Common myeloid progenitor, CD34-positive (primary cell): ENCODE measurements at regions of chr11 and their contacts with region 1.

Region 1: DNA sequence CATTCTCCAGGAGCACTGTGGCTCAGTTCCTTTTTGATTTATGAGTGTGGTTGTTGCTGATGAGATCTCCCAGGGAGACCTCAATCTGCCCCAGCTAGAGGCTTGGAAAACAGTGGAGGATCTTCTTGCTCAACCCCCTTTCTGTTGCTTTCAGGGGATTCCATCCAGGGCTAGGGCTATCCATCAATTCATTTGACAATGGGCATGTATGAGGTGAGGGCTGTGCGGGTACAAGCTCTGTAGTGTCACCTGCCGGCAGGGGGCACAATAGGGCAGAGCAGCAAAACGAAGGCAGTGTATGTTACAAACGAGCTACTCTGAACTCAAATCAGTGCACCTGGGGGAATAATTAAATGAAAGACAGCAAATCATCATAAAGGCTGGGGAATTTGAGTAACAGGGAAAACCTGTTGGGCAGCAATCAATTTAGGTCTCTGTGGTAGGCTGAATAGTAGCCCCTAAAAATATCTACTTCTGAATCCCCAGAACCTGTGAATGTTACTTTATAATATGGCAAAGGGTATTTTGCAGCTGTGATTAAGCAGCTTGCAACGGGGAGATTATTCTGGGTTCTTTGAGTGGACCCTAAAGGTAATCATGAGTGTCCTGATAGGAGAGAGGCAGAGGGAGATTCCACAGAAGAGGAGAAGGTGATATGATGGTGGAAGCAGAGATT is 170.3 kb upstream of the ZBED5 start:
- DNase-seq: peak; percentile 42 to 77 (median 72)
- H3K4me3 ChIP-seq: no peak overlapping the region
- H3K27ac ChIP-seq: no peak overlapping the region
- H3K4me1 ChIP-seq: no peaks in the 10 kb centered on the region
- H3K27me3 ChIP-seq: peaks cover 0 to 4% (median 0%) of the 10 kb centered on the region in 5 experiments

Region 2: DNA sequence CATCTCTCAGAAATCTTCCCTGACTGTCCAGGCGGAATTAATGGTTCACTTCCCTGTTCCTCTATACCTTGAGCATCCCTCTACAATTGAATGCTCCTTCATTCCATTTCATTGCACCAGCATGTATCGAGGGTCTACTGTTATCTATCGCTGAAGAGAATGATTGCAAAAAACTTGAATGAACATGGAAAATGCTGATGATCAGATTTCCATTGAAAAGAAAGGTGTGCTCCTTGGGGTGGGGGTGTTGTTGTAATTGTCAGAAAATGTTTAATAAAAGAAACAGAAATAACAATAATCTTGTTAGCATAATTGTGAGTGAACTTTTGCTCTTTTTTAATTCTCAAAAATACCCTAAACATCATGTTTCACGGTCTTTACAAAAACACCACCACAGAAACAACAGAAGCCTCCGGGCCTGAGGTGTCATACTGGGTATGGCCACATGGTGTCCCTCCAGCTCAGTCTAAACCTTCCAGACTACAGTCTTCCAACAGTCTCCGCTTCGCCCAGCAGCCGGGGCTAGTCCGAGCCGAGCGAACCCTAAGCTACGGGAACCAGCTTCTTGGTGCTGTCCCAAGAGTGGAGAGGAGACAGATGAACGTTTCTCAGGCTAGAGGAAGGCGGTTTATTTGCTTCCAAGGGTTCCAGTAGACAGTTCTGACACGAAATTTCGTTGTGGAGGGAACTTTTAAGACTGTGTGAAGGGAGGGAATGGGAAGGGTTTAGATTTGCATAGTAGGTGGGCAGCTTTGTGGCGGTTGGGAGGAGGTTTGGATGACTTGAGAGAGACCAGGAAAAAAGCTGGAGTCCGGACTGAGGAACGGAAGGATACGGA is 94.5 kb before region 1 on chr11:
- CTCF ChIA-PET with region 1: interaction called, 170 read pairs
- POLR2A ChIA-PET with region 1: no interaction called
- DNase-seq: peak; percentile 88 to 95 (median 93)
- H3K4me3 ChIP-seq: peak overlapping the region in 6 of 7 experiments; percentile 46 to 79 (median 68)
- H3K27ac ChIP-seq: no peak overlapping the region
- H3K4me1 ChIP-seq: peaks cover 3 to 28% (median 22%) of the 10 kb centered on the region in 4 experiments
- H3K27me3 ChIP-seq: peaks cover 0 to 41% (median 22%) of the 10 kb centered on the region in 5 experiments

Region 3: GRCh38 chr11:10979529-10979928 is 48.6 kb before region 1 on chr11:
- CTCF ChIA-PET with region 1: no interaction called
- POLR2A ChIA-PET with region 1: no interaction called
- DNase-seq: peak; percentile 52 to 88 (median 85)
- H3K4me3 ChIP-seq: no peak overlapping the region
- H3K27ac ChIP-seq: no peak overlapping the region
- H3K4me1 ChIP-seq: peaks cover 0 to 4% (median 2%) of the 10 kb centered on the region in 4 experiments
- H3K27me3 ChIP-seq: no peaks in the 10 kb centered on the region

Region 4: DNA sequence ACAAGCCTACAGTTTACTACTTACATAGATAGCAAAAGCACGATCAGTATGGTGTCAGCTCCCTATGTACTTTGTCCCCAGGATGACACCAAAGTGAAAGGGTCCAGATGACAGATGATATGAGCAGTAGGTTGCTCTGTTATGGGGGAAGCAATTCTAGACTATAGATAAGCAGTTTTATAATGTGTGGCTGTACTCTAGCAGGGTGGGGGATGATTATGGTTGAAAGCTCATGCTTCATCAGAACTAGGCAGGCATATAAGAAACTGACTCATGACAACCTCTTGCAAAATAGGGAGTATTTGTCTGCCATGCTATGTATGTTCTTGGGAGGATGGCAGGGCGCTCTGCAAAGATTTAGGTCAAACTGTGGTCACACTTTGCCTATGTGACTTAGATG is 12.1 kb before region 1 on chr11:
- CTCF ChIA-PET with region 1: interaction called, 12 read pairs
- POLR2A ChIA-PET with region 1: no interaction called
- DNase-seq: no peak
- H3K4me3 ChIP-seq: no peak overlapping the region
- H3K27ac ChIP-seq: no peak overlapping the region
- H3K4me1 ChIP-seq: no peaks in the 10 kb centered on the region
- H3K27me3 ChIP-seq: no peaks in the 10 kb centered on the region

Region 5: GRCh38 chr11:11787305-11788062 is 759.3 kb after region 1 on chr11:
- CTCF ChIA-PET with region 1: interaction called, 66 read pairs
- POLR2A ChIA-PET with region 1: no interaction called
- DNase-seq: peak; percentile 72 to 85 (median 79)
- H3K4me3 ChIP-seq: no peak overlapping the region
- H3K27ac ChIP-seq: no peak overlapping the region
- H3K4me1 ChIP-seq: no peaks in the 10 kb centered on the region
- H3K27me3 ChIP-seq: no peaks in the 10 kb centered on the region